Breast epithelium (tissue), 4 donors: ENCODE measurements at regions of chr4 and their contacts with region 1.

Region 1: DNA sequence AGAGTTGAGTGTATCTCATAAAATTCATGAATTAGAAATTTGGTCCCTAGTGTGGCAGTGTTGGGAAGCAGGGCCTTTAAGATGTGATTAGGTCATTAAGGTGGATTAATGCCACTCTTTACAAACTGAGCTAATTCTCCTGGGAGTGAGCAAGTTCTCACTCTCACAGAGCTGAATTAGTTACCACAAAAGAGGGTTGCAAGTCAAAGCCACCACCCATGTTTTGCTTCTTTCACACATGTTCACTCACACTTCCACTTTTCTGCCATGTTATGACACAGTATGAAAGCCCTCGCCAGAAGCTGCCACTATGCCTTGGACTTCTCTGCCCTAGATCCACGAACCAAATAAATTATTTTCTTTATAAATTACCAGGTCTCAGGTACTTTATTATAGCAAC is 332.1 kb downstream of the ARAP2 start:
- DNase-seq: no peak
- H3K4me3 ChIP-seq: no peak overlapping the region
- H3K27ac ChIP-seq: no peak overlapping the region
- H3K4me1 ChIP-seq: no peaks in the 10 kb centered on the region
- H3K27me3 ChIP-seq: no peaks in the 10 kb centered on the region
- CTCF ChIP-seq: no peak
- POLR2A ChIP-seq: no peak

Region 2: DNA sequence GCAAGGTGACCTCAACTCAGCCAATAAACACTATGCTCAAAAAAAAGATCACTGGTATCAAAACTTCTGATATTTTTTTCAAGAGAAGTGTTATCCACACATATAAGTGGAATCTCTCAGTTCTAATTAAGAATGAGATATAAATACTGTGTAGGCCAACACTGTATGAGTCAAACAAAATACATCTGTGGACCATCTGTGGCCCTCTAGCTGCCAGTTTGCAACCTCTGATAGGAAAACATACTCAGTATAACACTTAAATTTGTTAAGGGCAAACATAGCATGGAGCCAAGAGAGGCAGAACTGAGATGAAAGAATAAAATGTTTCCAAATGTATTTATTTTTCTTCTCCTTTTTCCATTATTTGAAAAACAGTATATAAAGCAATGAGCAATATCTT is 45.1 kb before region 1 on chr4:
- intact Hi-C with region 1: loop called (anchors 2 kb)
- DNase-seq: no peak
- H3K4me3 ChIP-seq: no peak overlapping the region
- H3K27ac ChIP-seq: no peak overlapping the region
- H3K4me1 ChIP-seq: no peaks in the 10 kb centered on the region
- H3K27me3 ChIP-seq: no peaks in the 10 kb centered on the region
- CTCF ChIP-seq: no peak
- POLR2A ChIP-seq: no peak

Region 3: DNA sequence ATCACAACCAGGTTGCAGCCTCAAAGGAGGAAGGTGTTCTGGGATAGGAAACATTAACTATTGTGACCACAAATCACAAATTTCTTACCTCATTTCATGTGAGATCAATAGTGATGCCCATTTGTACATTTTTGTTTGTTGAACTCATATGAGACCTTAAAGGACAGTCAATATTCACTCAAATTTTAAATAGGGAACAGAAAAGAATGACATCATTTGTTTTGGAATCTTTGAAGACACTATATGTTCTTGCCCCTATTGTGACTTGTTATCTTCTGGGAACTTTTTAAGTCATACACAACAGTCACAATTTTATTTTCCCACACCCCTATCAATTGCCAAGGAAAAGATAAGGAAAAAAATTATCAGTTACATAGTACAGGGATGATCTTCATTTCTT is 14.4 kb before region 1 on chr4:
- intact Hi-C with region 1: no loop called
- DNase-seq: no peak
- H3K4me3 ChIP-seq: no peak overlapping the region
- H3K27ac ChIP-seq: no peak overlapping the region
- H3K4me1 ChIP-seq: no peaks in the 10 kb centered on the region
- H3K27me3 ChIP-seq: no peaks in the 10 kb centered on the region
- CTCF ChIP-seq: no peak
- POLR2A ChIP-seq: no peak

Region 4: GRCh38 chr4:35952751-35953150 is 40.6 kb after region 1 on chr4:
- intact Hi-C with region 1: no loop called
- DNase-seq: no peak
- H3K4me3 ChIP-seq: no peak overlapping the region
- H3K27ac ChIP-seq: no peak overlapping the region
- H3K4me1 ChIP-seq: no peaks in the 10 kb centered on the region
- H3K27me3 ChIP-seq: no peaks in the 10 kb centered on the region
- CTCF ChIP-seq: no peak
- POLR2A ChIP-seq: no peak

Region 5: DNA sequence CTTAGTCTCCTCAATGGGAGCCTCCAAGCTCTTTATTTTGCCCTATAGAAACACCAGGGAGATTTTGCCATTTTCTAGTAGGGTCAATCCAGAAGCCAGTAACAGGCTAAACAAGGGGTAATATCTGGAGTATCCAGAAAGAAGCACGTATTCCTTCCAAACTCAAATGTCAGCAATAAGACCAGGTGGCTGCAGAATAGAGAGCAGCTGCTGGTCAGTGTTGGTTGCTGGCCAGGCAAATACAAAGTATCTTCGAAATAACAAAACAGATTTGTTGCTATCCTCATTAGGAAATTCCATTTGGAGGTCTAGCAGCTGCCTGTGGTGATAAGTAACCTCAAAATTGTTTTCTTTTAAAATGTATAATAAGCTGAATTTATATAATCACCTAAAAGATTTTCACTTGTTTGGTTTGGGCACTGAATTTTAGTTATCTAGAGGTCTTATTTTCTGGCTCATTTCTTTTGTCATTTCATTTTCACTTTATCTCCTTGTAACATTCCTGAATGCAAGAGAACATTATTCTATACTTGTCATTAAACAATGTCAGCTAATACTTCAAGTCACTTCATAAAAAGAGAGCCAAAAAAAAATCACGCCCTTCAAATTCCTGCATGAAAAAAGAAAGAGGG is 689.8 kb after region 1 on chr4:
- intact Hi-C with region 1: no loop called
- DNase-seq: no peak
- H3K4me3 ChIP-seq: no peak overlapping the region
- H3K27ac ChIP-seq: no peak overlapping the region
- H3K4me1 ChIP-seq: no peaks in the 10 kb centered on the region
- H3K27me3 ChIP-seq: no peaks in the 10 kb centered on the region
- CTCF ChIP-seq: no peak
- POLR2A ChIP-seq: no peak

Region 6: DNA sequence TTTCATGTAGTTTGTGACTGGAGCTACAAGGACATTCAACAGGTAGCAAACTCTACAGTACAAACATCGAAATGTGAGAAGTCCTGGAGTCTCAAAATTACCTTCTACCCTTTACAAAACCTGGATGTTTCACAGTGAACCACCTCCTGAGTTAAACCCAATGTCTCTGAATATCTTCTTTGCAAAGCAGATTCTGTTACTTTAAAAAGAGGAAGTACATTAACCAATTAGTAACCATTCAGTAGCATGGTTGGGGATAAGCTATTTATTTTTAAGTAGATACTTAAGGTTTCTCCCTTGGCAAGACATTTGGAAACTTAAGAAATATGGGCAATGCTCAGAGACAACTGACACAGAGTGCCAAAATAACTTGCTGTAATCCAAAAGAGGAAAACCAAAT is 960.5 kb after region 1 on chr4:
- intact Hi-C with region 1: no loop called
- DNase-seq: no peak
- H3K4me3 ChIP-seq: no peak overlapping the region
- H3K27ac ChIP-seq: no peak overlapping the region
- H3K4me1 ChIP-seq: no peaks in the 10 kb centered on the region
- H3K27me3 ChIP-seq: no peaks in the 10 kb centered on the region
- CTCF ChIP-seq: no peak
- POLR2A ChIP-seq: no peak